ENCODE measurements at regions of chr2 and their contacts with region 1.

Region 1: GRCh38 chr2:55519938-55520885 is 694 bp downstream of the CFAP36 start:
- DNase-seq: peak; percentile 32
- H3K4me3 ChIP-seq: peak overlapping the region; percentile 72 to 77
- H3K27ac ChIP-seq: peak overlapping the region; percentile 83 to 85
- H3K4me1 ChIP-seq: no peaks in the 10 kb centered on the region
- H3K27me3 ChIP-seq: no peaks in the 10 kb centered on the region
- CTCF ChIP-seq: no peak
- POLR2A ChIP-seq: no peak

Region 2: GRCh38 chr2:55282110-55282917 is 237.9 kb before region 1 on chr2:
- intact Hi-C with region 1: loop called (anchors 2 kb)
- DNase-seq: peak; percentile 65
- H3K4me3 ChIP-seq: peak overlapping the region; percentile 69 to 75
- H3K27ac ChIP-seq: peak overlapping the region; percentile 87 to 93
- H3K4me1 ChIP-seq: no peaks in the 10 kb centered on the region
- H3K27me3 ChIP-seq: no peaks in the 10 kb centered on the region
- CTCF ChIP-seq: no peak
- POLR2A ChIP-seq: peak; percentile 65

Region 3: GRCh38 chr2:55617175-55618024 is 97.2 kb after region 1 on chr2 and contains the start of gene PPP4R3B:
- intact Hi-C with region 1: loop called (anchors 5 kb)
- DNase-seq: peak; percentile 99
- H3K4me3 ChIP-seq: peak within 1 kb of the TSS; percentile 94 to 96
- H3K27ac ChIP-seq: peak within 1 kb of the TSS; percentile 91 to 96
- H3K4me1 ChIP-seq: peaks cover 3% of the 10 kb centered on the region
- H3K27me3 ChIP-seq: no peaks in the 10 kb centered on the region
- CTCF ChIP-seq: peak in 3 of 4 experiments; percentile 44 to 93 (median 82)
- POLR2A ChIP-seq: peak; percentile 93
- total RNA-seq, gene PPP4R3B: 51.4 to 62.0 TPM